ENCODE measurements at regions of chr1 and their contacts with region 1.

Region 1: GRCh38 chr1:158285756-158286241 is 3.9 kb upstream of the CD1C start:
- DNase-seq: peak; percentile 68
- ATAC-seq: peak; percentile 73
- H3K4me3 Mint-ChIP-seq: peak overlapping the region; percentile 88
- H3K27ac Mint-ChIP-seq: peak overlapping the region; percentile 99
- H3K4me1 Mint-ChIP-seq: peaks cover 72% of the 10 kb centered on the region
- H3K27me3 Mint-ChIP-seq: no peaks in the 10 kb centered on the region
- CTCF ChIP-seq: no peak

Region 2: GRCh38 chr1:157725221-157725577 is 560.6 kb before region 1 on chr1:
- CTCF ChIA-PET with region 1: no interaction called
- POLR2A ChIA-PET with region 1: no interaction called
- intact Hi-C with region 1: loop called (anchors 10 kb)
- DNase-seq: no peak
- ATAC-seq: peak; percentile 17
- H3K4me3 Mint-ChIP-seq: peak overlapping the region; percentile 16
- H3K27ac Mint-ChIP-seq: peak overlapping the region; percentile 97
- H3K4me1 Mint-ChIP-seq: peaks cover 71% of the 10 kb centered on the region
- H3K27me3 Mint-ChIP-seq: no peaks in the 10 kb centered on the region
- CTCF ChIP-seq: no peak

Region 3: GRCh38 chr1:158177700-158178450 is 107.9 kb before region 1 on chr1:
- CTCF ChIA-PET with region 1: no interaction called
- POLR2A ChIA-PET with region 1: interaction called, 15 read pairs
- intact Hi-C with region 1: loop called (anchors 2 kb)
- DNase-seq: peak; percentile 70
- ATAC-seq: peak; percentile 77
- H3K4me3 Mint-ChIP-seq: peak overlapping the region; percentile 78
- H3K27ac Mint-ChIP-seq: peak overlapping the region; percentile 81
- H3K4me1 Mint-ChIP-seq: peaks cover 80% of the 10 kb centered on the region
- H3K27me3 Mint-ChIP-seq: no peaks in the 10 kb centered on the region
- CTCF ChIP-seq: no peak

Region 4: DNA sequence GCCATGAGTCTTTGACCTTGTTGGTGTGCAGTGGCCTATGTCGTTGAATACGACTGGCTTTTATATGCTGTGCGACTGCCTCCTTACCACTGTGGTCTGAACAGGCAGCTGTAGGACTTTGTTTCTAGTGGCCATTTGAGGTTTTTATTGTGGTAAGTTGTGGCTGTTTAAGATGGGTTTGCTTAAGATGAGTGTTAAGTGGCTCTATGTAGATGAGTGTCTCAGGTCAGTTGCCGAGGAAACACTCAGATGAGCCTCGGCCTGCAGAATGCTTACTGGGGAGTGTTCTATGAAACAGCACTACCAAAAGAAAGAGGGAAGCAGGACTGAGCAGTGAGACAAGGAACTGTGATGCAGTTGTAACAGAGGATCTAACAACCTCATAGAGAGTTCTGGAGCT is 11.0 kb before region 1 on chr1:
- CTCF ChIA-PET with region 1: no interaction called
- POLR2A ChIA-PET with region 1: no interaction called
- intact Hi-C with region 1: loop called (anchors 1 kb)
- DNase-seq: no peak
- ATAC-seq: peak; percentile 85
- H3K4me3 Mint-ChIP-seq: peak overlapping the region; percentile 29
- H3K27ac Mint-ChIP-seq: peak overlapping the region; percentile 73
- H3K4me1 Mint-ChIP-seq: peaks cover 39% of the 10 kb centered on the region
- H3K27me3 Mint-ChIP-seq: no peaks in the 10 kb centered on the region
- CTCF ChIP-seq: no peak

Region 5: DNA sequence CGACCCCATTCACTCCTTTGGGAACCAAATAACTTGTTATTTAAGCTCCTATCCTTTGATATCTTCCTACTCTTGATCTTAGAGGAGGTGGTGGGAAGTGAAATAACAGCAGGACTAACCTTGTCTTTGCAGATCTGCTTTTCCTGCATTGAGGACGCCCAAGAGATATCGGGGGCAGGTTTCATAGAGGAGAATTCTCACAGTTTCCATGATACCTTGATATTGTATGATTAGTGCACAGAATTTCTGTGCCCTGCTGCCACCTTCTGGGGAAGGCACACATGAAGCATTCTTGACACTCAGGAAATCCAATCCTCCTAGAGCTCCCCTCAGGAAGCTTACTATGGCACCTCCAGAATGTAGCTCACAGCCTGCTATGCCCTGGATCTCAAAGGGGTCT is 43.9 kb after region 1 on chr1:
- CTCF ChIA-PET with region 1: interaction called, 19 read pairs
- POLR2A ChIA-PET with region 1: interaction called, 12 read pairs
- intact Hi-C with region 1: loop called (anchors 2 kb)
- DNase-seq: no peak
- ATAC-seq: peak; percentile 47
- H3K4me3 Mint-ChIP-seq: no peak overlapping the region
- H3K27ac Mint-ChIP-seq: no peak overlapping the region
- H3K4me1 Mint-ChIP-seq: peaks cover 26% of the 10 kb centered on the region
- H3K27me3 Mint-ChIP-seq: no peaks in the 10 kb centered on the region
- CTCF ChIP-seq: no peak

Region 6: GRCh38 chr1:159009704-159010361 is 724.0 kb after region 1 on chr1 and contains the start of gene IFI16:
- CTCF ChIA-PET with region 1: no interaction called
- POLR2A ChIA-PET with region 1: interaction called, 7 read pairs
- intact Hi-C with region 1: loop called (anchors 2 kb)
- DNase-seq: no peak
- ATAC-seq: peak; percentile 61
- H3K4me3 Mint-ChIP-seq: peak within 1 kb of the TSS; percentile 91
- H3K27ac Mint-ChIP-seq: peak within 1 kb of the TSS; percentile 93
- H3K4me1 Mint-ChIP-seq: peaks cover 72% of the 10 kb centered on the region
- H3K27me3 Mint-ChIP-seq: no peaks in the 10 kb centered on the region
- CTCF ChIP-seq: no peak
- total RNA-seq, gene IFI16: 145 and 160 TPM in 2 replicates

Region 7: GRCh38 chr1:159501082-159501481 is 1215.3 kb after region 1 on chr1:
- CTCF ChIA-PET with region 1: no interaction called
- POLR2A ChIA-PET with region 1: no interaction called
- intact Hi-C with region 1: no loop called
- DNase-seq: no peak
- ATAC-seq: no peak
- H3K4me3 Mint-ChIP-seq: no peak overlapping the region
- H3K27ac Mint-ChIP-seq: no peak overlapping the region
- H3K4me1 Mint-ChIP-seq: no peaks in the 10 kb centered on the region
- H3K27me3 Mint-ChIP-seq: peaks cover 3% of the 10 kb centered on the region
- CTCF ChIP-seq: no peak

Measured in activated B cell treated with CpG ODN at 0.5 μM for 24 hours (primary cell).